Activated T-helper 1 cell treated with anti-CD3 and anti-CD28 coated beads, Interleukin-12 subunit alpha, Interleukin-12 subunit beta, Interleukin-2, Interleukin-4 antibody, amounts not matched to agents 30 ng/mL and 10 ng/mL and 1 ng/mL, durations not matched to agents 14 hours and 24 hours and 36 hours (primary cell): ENCODE measurements at regions of chr18 and their contacts with region 1.

Region 1: DNA sequence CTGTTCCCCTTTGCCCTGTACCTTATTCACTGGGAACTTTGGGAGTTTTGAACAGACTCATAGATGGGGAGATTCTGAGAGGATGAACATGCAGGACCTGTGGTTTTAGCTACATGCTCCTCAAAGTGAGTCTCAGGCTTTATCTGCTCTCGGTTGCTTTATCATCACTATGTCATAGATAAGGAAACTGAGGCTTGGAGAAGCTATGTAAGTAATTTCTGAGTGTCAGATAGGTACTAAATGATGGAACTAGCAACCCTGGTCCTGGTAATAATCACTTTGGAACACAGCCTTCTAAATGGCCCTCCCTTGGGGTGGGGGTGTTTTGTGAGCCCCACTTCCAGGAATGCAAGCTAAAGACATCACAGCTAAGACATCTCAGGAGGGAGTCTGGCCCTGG is 186.2 kb upstream of the MEX3C start:
- DNase-seq: no peak
- H3K4me3 Mint-ChIP-seq: no peak overlapping the region
- H3K27ac Mint-ChIP-seq: no peak overlapping the region
- H3K4me1 Mint-ChIP-seq: no peaks in the 10 kb centered on the region
- H3K27me3 Mint-ChIP-seq: peaks cover 2% of the 10 kb centered on the region

Region 2: DNA sequence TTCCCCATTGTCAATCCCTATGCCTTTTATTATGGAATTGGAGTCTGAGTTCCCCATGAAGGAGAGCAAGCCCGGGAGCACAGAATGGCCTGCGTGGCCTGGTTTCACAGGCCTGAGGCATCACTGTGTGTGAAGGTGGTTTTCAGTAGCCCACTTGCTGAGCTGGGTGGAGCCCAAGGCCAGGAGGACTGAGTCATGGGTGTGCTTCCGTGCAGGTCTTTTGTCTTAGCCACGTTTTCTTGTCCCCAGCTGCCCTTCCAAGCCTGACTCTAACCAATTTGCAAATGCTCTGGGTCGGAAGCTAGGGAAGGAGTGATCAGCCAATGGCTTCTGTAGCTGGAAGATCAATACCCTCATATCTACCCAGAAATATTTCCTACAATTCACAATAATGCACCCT is 704.7 kb before region 1 on chr18:
- intact Hi-C with region 1: no loop called
- DNase-seq: no peak
- H3K4me3 Mint-ChIP-seq: no peak overlapping the region
- H3K27ac Mint-ChIP-seq: no peak overlapping the region
- H3K4me1 Mint-ChIP-seq: no peaks in the 10 kb centered on the region
- H3K27me3 Mint-ChIP-seq: no peaks in the 10 kb centered on the region

Region 3: GRCh38 chr18:51110073-51110803 is 273.5 kb before region 1 on chr18:
- intact Hi-C with region 1: loop called (anchors 1 kb)
- DNase-seq: peak; percentile 57
- H3K4me3 Mint-ChIP-seq: no peak overlapping the region
- H3K27ac Mint-ChIP-seq: no peak overlapping the region
- H3K4me1 Mint-ChIP-seq: peaks cover 22% of the 10 kb centered on the region
- H3K27me3 Mint-ChIP-seq: no peaks in the 10 kb centered on the region